ENCODE measurements at regions of chr1 and their contacts with region 1.

Region 1: DNA sequence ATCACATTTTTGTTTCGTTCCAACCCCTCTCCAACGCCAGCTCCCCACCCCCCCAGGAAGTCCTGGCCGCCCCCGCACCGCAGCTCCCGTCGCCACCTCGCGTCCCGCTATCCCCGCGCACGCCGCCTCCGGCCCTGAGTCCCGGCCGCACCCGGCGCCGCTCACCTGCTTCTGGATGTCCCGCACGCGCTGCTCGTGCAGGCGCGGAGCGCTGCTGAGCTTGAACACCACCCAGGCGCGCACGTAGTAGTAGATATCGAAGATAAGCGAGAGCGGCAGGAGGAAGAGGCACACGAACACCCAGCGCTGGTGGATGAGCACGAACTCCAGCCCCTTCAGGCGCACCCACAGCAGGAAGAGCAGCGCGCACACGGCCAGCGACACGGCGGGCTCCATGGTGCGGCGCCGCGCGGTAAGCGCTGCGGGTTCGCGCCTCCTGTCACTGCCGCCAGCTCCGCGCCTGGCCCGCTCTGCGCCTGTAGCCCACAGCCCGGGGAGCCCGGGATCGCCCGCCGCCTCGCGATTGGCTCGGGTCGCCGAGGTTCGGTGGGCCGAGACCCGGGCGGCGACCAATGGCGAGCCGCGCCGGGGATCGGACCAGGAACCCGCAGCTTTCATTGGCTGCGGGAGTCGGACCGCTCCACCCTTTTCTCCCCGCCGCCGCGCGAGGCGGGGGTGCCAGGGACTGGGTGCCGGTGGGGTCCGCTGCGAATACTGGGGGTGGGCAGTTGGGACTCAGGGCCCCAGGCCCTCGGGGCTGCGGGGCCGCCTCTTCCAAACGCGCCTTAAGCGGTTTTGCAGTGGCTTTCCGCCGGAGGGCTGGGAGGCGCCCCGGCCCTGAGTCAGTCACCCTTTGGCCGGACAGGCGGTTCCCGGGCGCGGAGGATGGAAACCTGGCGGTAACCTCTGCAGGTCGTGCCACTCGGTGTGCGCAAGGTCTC is at the start of gene DHCR24:
- DNase-seq: peak; percentile 69 to 90
- H3K4me3 ChIP-seq: peak within 1 kb of the TSS; percentile 96
- H3K27ac ChIP-seq: peak within 1 kb of the TSS; percentile 79
- H3K4me1 ChIP-seq: peaks cover 61% of the 10 kb centered on the region
- H3K27me3 ChIP-seq: no peaks in the 10 kb centered on the region
- CTCF ChIP-seq: no peak
- total RNA-seq, gene DHCR24: 195 and 369 TPM in 2 replicates

Region 2: GRCh38 chr1:54818461-54819194 is 68.4 kb before region 1 on chr1:
- CTCF ChIA-PET with region 1: no interaction called
- POLR2A ChIA-PET with region 1: no interaction called
- intact Hi-C with region 1: loop called (anchors 2 kb)
- DNase-seq: peak; percentile 27 to 31
- H3K4me3 ChIP-seq: no peak overlapping the region
- H3K27ac ChIP-seq: peak overlapping the region; percentile 47
- H3K4me1 ChIP-seq: peaks cover 14% of the 10 kb centered on the region
- H3K27me3 ChIP-seq: no peaks in the 10 kb centered on the region
- CTCF ChIP-seq: no peak

Region 3: DNA sequence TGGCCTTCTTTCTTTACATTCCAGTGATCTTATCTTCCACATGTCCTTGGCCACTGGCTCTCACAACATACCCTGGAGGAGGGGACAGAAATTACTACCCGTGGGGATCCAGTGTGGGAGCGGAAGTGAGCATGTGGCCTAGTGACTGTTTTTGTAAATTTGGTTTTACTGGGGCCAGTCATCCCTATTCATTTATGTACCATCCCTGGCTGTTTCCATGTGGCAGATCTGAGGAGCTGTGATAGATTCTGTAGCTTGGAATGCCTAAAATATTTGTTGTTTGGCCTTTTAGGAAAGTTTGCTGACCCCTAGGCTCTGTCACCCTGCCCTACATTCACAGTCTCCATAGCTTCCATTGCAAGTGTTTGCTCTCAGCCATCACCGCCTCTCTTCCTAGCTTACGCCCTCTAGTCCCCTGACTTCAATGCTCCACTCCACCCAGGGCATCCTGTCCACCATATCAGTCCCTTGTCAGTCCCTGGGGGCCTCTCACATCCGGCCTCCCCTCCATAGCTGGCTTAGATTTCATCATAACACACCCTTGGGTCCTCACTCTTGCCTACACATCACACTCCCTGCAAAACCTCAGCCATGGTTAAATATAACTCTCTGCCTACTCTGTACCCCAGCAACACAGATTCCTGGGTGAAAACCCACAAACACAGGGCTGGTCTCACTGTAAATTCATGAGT is 25.8 kb before region 1 on chr1:
- CTCF ChIA-PET with region 1: no interaction called
- POLR2A ChIA-PET with region 1: interaction called, 7 read pairs
- intact Hi-C with region 1: loop called (anchors 2 kb)
- DNase-seq: peak; percentile 79 to 89
- H3K4me3 ChIP-seq: no peak overlapping the region
- H3K27ac ChIP-seq: peak overlapping the region; percentile 88
- H3K4me1 ChIP-seq: peaks cover 90% of the 10 kb centered on the region
- H3K27me3 ChIP-seq: no peaks in the 10 kb centered on the region
- CTCF ChIP-seq: no peak

Region 4: GRCh38 chr1:54876814-54877213 is 10.2 kb before region 1 on chr1:
- CTCF ChIA-PET with region 1: no interaction called
- POLR2A ChIA-PET with region 1: interaction called, 21 read pairs
- intact Hi-C with region 1: no loop called
- DNase-seq: no peak
- H3K4me3 ChIP-seq: no peak overlapping the region
- H3K27ac ChIP-seq: no peak overlapping the region
- H3K4me1 ChIP-seq: peaks cover 35% of the 10 kb centered on the region
- H3K27me3 ChIP-seq: no peaks in the 10 kb centered on the region
- CTCF ChIP-seq: no peak

Region 5: DNA sequence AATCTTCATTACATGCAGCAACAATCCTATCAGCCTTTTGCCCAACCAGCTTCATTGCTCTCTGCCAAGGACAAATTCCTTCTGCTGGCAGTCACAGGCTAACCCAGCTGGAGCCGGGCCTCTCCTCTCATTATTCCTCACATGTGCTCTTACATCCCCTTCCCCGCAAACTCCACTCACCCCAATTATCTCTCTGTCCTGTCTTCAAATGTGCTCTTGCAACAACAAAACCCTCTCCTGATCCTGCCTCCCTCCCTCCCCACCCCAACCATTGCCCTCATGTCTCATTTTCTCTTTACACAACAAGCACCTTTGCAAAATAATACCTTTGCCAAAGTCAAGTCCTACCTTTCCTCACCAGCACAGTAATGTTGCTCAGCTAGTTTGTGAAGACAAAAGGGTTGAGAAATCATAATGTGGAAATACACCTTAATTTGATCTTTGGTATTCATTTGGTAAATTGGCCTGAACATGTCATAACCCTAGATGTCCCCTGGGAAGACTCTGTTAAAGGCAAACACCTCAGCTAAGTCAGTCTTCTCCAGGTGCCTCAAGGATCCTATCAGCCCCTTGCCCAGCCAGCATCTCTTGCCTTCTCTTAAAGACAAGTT is 36.0 kb after region 1 on chr1:
- CTCF ChIA-PET with region 1: no interaction called
- POLR2A ChIA-PET with region 1: no interaction called
- intact Hi-C with region 1: loop called (anchors 2 kb)
- DNase-seq: peak; percentile 25 to 97
- H3K4me3 ChIP-seq: no peak overlapping the region
- H3K27ac ChIP-seq: peak overlapping the region; percentile 77
- H3K4me1 ChIP-seq: peaks cover 29% of the 10 kb centered on the region
- H3K27me3 ChIP-seq: no peaks in the 10 kb centered on the region
- CTCF ChIP-seq: no peak

Measured in PC-9 (cell line).